ENCODE measurements at regions of chr11 and their contacts with region 1.

Region 1: GRCh38 chr11:58654079-58654907 is 31.8 kb downstream of the CNTF start:
- DNase-seq: peak; percentile 81
- ATAC-seq: peak; percentile 98
- H3K4me3 ChIP-seq: no peak overlapping the region
- H3K4me3 Mint-ChIP-seq: no peak overlapping the region
- H3K27ac ChIP-seq: no peak overlapping the region
- H3K27ac Mint-ChIP-seq: no peak overlapping the region
- H3K4me1 ChIP-seq: peaks cover 0 to 5% of the 10 kb centered on the region in 2 donors
- H3K4me1 Mint-ChIP-seq: peaks cover 4% of the 10 kb centered on the region
- H3K27me3 ChIP-seq: no peaks in the 10 kb centered on the region
- H3K27me3 Mint-ChIP-seq: no peaks in the 10 kb centered on the region
- CTCF ChIP-seq: peak; percentile 93

Region 2: GRCh38 chr11:58675334-58676155 is 21.3 kb after region 1 on chr11:
- CTCF ChIA-PET with region 1: interaction called, 65 read pairs
- POLR2A ChIA-PET with region 1: no interaction called
- intact Hi-C with region 1: loop called (anchors 1 kb)
- DNase-seq: peak; percentile 74
- ATAC-seq: peak; percentile 73
- H3K4me3 ChIP-seq: no peak overlapping the region
- H3K4me3 Mint-ChIP-seq: no peak overlapping the region
- H3K27ac ChIP-seq: no peak overlapping the region
- H3K27ac Mint-ChIP-seq: no peak overlapping the region
- H3K4me1 ChIP-seq: no peaks in the 10 kb centered on the region
- H3K4me1 Mint-ChIP-seq: no peaks in the 10 kb centered on the region
- H3K27me3 ChIP-seq: peaks cover 0 to 16% (median 4%) of the 10 kb centered on the region in 4 experiments
- H3K27me3 Mint-ChIP-seq: peaks cover 12% of the 10 kb centered on the region
- CTCF ChIP-seq: peak; percentile 96

Region 3: GRCh38 chr11:58788355-58789023 is 134.2 kb after region 1 on chr11:
- CTCF ChIA-PET with region 1: interaction called, 4 read pairs
- POLR2A ChIA-PET with region 1: no interaction called
- intact Hi-C with region 1: loop called (anchors 1 kb)
- DNase-seq: peak; percentile 53
- ATAC-seq: peak; percentile 80
- H3K4me3 ChIP-seq: no peak overlapping the region
- H3K4me3 Mint-ChIP-seq: no peak overlapping the region
- H3K27ac ChIP-seq: no peak overlapping the region
- H3K27ac Mint-ChIP-seq: no peak overlapping the region
- H3K4me1 ChIP-seq: no peaks in the 10 kb centered on the region
- H3K4me1 Mint-ChIP-seq: no peaks in the 10 kb centered on the region
- H3K27me3 ChIP-seq: no peaks in the 10 kb centered on the region
- H3K27me3 Mint-ChIP-seq: peaks cover 14% of the 10 kb centered on the region
- CTCF ChIP-seq: peak; percentile 75

Region 4: GRCh38 chr11:58923300-58923788 is 269.1 kb after region 1 on chr11:
- CTCF ChIA-PET with region 1: interaction called, 4 read pairs
- POLR2A ChIA-PET with region 1: no interaction called
- intact Hi-C with region 1: loop called (anchors 1 kb)
- DNase-seq: peak; percentile 51
- ATAC-seq: peak; percentile 76
- H3K4me3 ChIP-seq: no peak overlapping the region
- H3K4me3 Mint-ChIP-seq: peak overlapping the region; percentile 38
- H3K27ac ChIP-seq: no peak overlapping the region
- H3K27ac Mint-ChIP-seq: no peak overlapping the region
- H3K4me1 ChIP-seq: peaks cover 18 to 19% of the 10 kb centered on the region in 2 donors
- H3K4me1 Mint-ChIP-seq: peaks cover 22% of the 10 kb centered on the region
- H3K27me3 ChIP-seq: peaks cover 0 to 6% (median 3%) of the 10 kb centered on the region in 4 experiments
- H3K27me3 Mint-ChIP-seq: peaks cover 8% of the 10 kb centered on the region
- CTCF ChIP-seq: peak; percentile 52

Measured in B cell (primary cell).